ENCODE measurements at regions of chr2 and their contacts with region 1.

Region 1: GRCh38 chr2:218286570-218287459 is 5.5 kb downstream of the TMBIM1 start:
- DNase-seq: peak; percentile 88
- ATAC-seq: peak; percentile 93
- H3K4me3 ChIP-seq: peak overlapping the region; percentile 27 to 60
- H3K27ac ChIP-seq: peak overlapping the region; percentile 81
- H3K4me1 ChIP-seq: peaks cover 33 to 71% of the 10 kb centered on the region in 2 experiments
- H3K27me3 ChIP-seq: no peaks in the 10 kb centered on the region
- CTCF ChIP-seq: no peak
- POLR2A ChIP-seq: no peak
- RAD21 ChIP-seq: no peak

Region 2: DNA sequence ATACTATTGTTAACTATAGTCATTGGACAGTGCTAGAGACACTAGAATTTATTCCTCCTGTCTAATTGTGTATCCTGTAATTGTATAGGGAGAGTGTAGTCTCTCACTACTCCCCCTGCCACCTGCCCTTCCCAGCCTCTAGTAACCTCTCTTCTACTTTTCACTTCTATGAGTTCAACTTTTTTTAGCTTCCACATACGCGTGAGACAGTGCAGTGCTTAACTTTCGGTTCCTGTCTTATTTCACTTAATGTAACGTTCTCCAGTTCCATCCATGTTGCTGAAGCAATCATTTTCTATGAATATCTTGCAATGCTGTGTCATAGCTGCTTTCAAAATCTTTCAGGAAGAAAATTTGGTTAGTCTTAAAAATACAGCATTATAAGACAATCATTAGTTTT is 240.6 kb before region 1 on chr2:
- CTCF ChIA-PET with region 1: no interaction called
- POLR2A ChIA-PET with region 1: no interaction called
- RAD21 ChIA-PET with region 1: no interaction called
- intact Hi-C with region 1: no loop called
- DNase-seq: no peak
- ATAC-seq: no peak
- H3K4me3 ChIP-seq: no peak overlapping the region
- H3K27ac ChIP-seq: no peak overlapping the region
- H3K4me1 ChIP-seq: no peaks in the 10 kb centered on the region
- H3K27me3 ChIP-seq: no peaks in the 10 kb centered on the region
- CTCF ChIP-seq: no peak
- POLR2A ChIP-seq: no peak
- RAD21 ChIP-seq: no peak

Region 3: DNA sequence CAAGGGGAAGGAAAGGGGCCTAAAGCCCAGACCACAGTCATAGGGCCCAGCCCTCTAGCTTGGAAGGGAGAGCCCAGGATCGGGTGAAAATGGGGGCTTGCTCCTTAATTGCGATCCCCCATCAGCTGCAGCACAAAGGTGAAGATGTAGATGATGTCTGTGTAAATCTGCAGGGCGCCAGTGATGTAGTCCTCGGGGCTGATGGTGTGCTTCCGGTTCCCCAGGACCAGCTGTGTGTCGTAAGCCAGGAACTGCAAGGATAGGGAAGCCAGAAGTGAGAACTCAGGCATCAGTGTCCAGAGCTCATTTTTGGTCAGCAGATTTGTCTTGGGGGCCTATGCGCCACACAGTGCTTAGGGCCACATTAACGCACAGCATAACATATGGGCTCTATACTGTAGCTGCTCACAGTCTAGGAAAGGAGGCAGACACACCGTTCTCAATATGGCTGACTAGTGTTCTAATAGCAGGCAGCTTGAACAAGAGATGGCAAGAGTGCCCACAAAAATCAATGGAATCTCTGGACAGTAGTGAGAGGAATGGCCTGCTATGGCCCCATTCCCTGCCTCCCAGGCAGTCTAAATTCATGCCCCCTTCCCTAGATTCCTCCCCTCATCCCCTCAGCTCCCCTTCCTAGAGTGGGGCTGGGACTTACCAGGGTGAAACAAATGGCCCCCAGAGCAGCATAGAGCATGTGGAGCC is 11.3 kb before region 1 on chr2:
- CTCF ChIA-PET with region 1: interaction called, 6 read pairs
- POLR2A ChIA-PET with region 1: interaction called, 19 read pairs
- RAD21 ChIA-PET with region 1: interaction called in 1 of 2 experiments, 3 read pairs
- intact Hi-C with region 1: no loop called
- DNase-seq: no peak
- ATAC-seq: no peak
- H3K4me3 ChIP-seq: no peak overlapping the region
- H3K27ac ChIP-seq: no peak overlapping the region
- H3K4me1 ChIP-seq: peaks cover 13 to 22% of the 10 kb centered on the region in 2 experiments
- H3K27me3 ChIP-seq: no peaks in the 10 kb centered on the region
- CTCF ChIP-seq: no peak
- POLR2A ChIP-seq: no peak
- RAD21 ChIP-seq: no peak

Measured in HCT116 (cell line).